A673 (cell line): ENCODE measurements at regions of chr15 and their contacts with region 1.

Region 1: DNA sequence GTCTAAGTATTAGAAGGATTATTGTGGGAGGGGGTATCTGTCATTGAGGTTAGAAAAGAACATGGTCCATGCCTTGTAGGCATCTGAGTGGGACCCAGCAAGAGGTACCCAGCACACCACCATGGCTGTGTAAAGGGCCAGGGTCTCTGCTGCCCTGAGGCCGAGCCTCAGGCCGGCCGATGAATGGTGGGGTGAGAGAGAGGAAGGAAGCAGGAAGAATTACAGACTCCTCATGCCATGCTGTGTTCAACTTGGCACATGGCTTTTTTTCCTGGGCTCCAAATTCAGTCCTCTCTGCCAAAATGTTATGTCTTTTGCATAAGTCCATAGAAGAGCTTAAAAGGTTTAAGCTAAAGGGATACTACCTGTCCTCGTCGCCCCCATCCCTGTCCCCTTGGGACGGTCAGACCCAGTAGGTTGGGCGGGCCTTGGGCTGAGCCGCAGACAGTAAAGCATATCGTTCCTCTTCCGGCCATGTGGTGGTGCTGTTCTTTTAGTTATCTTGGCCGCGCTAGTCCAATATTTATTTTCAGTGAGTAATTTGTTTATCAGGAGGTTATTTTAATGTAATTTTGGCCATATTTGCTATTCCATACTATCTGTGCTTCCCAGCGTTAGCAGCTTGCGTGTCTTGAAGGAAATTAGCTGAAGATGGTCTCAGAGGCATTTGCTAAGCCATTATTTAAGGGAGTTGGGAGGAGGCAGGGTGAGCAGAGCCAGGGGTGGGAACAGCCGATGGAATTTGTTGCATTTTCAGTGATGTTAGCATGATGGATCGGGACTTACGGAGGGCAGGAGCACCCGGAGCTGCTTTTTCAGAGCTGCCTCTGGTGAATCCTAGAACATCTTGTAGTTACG is 152.4 kb downstream of the AGBL1 start:
- DNase-seq: peak; percentile 45
- H3K4me3 ChIP-seq: no peak overlapping the region
- H3K27ac ChIP-seq: no peak overlapping the region
- H3K4me1 ChIP-seq: no peaks in the 10 kb centered on the region
- H3K27me3 ChIP-seq: peaks cover 39% of the 10 kb centered on the region
- CTCF ChIP-seq: peak; percentile 80

Region 2: DNA sequence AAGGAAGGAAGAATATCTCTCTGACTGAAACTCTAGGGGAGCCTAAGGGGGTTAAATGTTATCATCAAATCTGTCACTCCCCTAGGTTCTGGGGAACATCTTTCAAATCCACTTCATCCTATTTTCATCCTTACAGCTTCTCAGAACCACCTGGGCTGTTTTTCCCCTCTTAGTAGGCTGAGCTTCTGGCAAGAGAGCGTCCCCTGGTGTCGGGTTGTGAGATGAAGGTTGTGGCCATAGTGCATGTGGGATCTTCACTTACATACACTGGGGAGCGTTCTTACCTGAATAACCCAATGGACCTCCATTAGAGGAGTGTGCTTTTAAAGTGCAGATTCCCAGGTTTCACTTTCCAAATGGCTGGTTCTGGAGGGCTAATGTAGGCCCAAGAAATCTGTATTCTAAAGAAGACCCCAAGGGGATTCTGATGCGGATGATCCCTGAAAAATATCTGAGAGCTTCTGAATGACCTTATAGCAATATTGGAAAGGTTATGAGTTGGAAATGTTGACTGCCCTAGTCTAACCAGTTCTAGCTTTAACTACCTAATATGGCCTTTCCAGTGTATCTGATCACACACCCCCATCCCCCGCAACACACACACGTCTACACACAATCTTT is 511.3 kb after region 1 on chr15:
- CTCF ChIA-PET with region 1: interaction called, 3 read pairs
- POLR2A ChIA-PET with region 1: no interaction called
- intact Hi-C with region 1: loop called (anchors 1 kb)
- DNase-seq: peak; percentile 34
- H3K4me3 ChIP-seq: no peak overlapping the region
- H3K27ac ChIP-seq: no peak overlapping the region
- H3K4me1 ChIP-seq: no peaks in the 10 kb centered on the region
- H3K27me3 ChIP-seq: no peaks in the 10 kb centered on the region
- CTCF ChIP-seq: peak; percentile 69

Region 3: DNA sequence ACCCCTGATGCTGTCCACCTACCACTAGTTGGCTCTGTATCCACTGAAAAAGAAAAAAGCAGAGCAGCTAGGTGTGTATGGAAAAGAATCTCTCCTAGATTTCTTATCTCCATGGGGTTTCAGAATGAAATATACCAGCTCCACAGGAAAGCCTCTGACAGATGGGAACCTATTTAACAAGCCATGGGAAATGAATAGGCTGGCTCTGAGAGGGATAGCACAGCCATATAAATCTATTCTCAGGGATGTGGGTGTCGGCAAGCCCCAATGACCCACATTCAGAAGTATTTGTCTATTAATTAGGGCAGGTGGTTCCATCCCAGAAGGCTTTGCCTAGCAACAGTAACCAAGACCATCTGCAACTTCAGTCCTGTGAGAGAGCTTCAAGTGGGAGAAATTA is 541.6 kb after region 1 on chr15:
- CTCF ChIA-PET with region 1: no interaction called
- POLR2A ChIA-PET with region 1: no interaction called
- intact Hi-C with region 1: no loop called
- DNase-seq: no peak
- H3K4me3 ChIP-seq: no peak overlapping the region
- H3K27ac ChIP-seq: no peak overlapping the region
- H3K4me1 ChIP-seq: no peaks in the 10 kb centered on the region
- H3K27me3 ChIP-seq: no peaks in the 10 kb centered on the region
- CTCF ChIP-seq: no peak